Activated CD8-positive, alpha-beta T cell treated with anti-CD3 and anti-CD28 coated beads, Interleukin-2, amount 10 ng/mL, durations not matched to agents 7 days and 5 days (primary cell): ENCODE measurements at regions of chr17 and their contacts with region 1.

Region 1: DNA sequence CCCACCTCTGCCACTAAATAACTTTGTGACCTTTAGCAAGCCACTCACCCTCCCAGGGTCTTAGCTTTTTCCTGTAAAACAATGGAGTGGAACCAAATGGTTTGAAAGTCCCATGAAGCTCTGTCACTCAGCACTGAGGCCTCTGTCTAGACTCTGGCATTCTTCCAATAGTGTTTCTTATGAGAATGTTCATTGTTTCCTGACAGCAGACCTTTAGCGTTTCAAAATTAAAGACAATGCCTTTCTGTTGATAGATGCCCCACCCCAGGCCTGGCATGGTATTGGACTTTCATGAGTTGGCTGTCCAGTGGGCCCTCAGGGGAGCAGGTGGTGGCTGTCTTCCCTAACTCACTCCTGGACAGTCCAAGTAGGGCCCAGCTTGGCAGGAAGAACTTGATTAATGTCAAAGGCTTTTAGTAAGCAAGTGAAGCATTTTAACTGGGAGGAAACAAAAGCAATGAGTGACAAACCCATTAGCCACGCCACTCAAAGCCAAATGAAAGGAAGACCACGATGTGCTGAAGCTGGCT is 186.5 kb upstream of the CCL2 start:
- DNase-seq: no peak
- ATAC-seq: no peak
- H3K4me3 Mint-ChIP-seq: no peak overlapping the region
- H3K27ac Mint-ChIP-seq: no peak overlapping the region
- H3K4me1 Mint-ChIP-seq: no peaks in the 10 kb centered on the region
- H3K27me3 Mint-ChIP-seq: peaks cover 3% of the 10 kb centered on the region

Region 2: GRCh38 chr17:33949100-33949499 is 119.5 kb before region 1 on chr17:
- CTCF ChIA-PET with region 1: no interaction called
- POLR2A ChIA-PET with region 1: interaction called, 10 read pairs
- DNase-seq: no peak
- ATAC-seq: no peak
- H3K4me3 Mint-ChIP-seq: no peak overlapping the region
- H3K27ac Mint-ChIP-seq: no peak overlapping the region
- H3K4me1 Mint-ChIP-seq: no peaks in the 10 kb centered on the region
- H3K27me3 Mint-ChIP-seq: peaks cover 14% of the 10 kb centered on the region

Region 3: GRCh38 chr17:33990943-33991706 is 77.4 kb before region 1 on chr17:
- CTCF ChIA-PET with region 1: no interaction called
- POLR2A ChIA-PET with region 1: no interaction called
- DNase-seq: no peak
- ATAC-seq: no peak
- H3K4me3 Mint-ChIP-seq: no peak overlapping the region
- H3K27ac Mint-ChIP-seq: no peak overlapping the region
- H3K4me1 Mint-ChIP-seq: no peaks in the 10 kb centered on the region
- H3K27me3 Mint-ChIP-seq: peaks cover 12% of the 10 kb centered on the region

Region 4: DNA sequence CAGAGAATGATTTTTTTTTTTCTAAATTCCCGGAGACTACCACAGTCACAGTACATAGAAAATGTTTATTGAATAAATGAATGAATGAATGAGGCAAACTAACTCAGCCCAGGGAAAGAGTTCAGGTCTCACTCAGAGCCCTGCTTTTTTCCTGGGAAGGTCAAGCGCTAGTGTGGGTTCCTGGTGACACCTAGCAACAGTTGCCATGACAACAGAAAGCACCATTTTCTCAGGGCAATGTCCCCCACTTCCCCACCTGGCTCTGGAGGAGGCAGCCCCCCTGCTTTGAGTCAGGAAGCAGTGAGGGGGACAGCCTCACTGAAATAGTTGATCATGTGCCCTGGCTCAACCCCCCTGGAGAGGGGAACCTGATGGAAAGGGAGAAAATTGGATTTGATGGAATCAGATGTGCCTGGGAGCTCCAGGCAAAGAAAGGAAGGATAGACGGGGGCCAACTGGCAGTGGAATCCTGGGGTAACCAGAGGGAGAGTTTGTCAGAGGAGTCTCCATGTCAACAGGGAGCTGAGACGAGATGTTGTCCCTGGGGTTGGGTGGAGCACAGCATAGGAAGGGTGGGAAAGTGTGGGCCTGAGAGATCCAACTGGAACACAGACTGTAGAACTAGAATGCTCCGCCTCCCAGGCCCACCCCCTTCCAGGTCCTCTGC is 55.7 kb before region 1 on chr17:
- CTCF ChIA-PET with region 1: no interaction called
- POLR2A ChIA-PET with region 1: no interaction called
- DNase-seq: no peak
- ATAC-seq: no peak
- H3K4me3 Mint-ChIP-seq: no peak overlapping the region
- H3K27ac Mint-ChIP-seq: no peak overlapping the region
- H3K4me1 Mint-ChIP-seq: no peaks in the 10 kb centered on the region
- H3K27me3 Mint-ChIP-seq: peaks cover 4% of the 10 kb centered on the region

Region 5: DNA sequence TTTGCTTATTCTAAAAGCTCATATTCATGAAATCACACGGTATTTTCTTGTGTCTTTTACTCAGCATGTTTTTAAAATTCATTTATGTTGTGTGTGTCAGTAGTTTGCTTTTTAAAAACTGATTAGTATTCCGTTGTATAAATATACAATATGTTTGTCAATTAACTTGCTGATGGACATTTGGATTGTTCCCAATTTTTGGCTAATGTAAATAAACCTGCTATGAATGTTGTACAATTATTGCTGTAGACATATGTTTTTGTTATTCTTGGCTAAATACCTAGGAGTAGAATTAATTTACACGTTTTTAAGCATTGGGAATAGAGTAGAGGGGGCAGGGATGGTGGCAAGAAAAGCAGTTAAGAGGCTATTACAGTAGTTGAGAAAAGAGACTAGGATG is 13.0 kb before region 1 on chr17:
- CTCF ChIA-PET with region 1: no interaction called
- POLR2A ChIA-PET with region 1: no interaction called
- DNase-seq: no peak
- ATAC-seq: no peak
- H3K4me3 Mint-ChIP-seq: no peak overlapping the region
- H3K27ac Mint-ChIP-seq: no peak overlapping the region
- H3K4me1 Mint-ChIP-seq: no peaks in the 10 kb centered on the region
- H3K27me3 Mint-ChIP-seq: peaks cover 2% of the 10 kb centered on the region